ENCODE measurements at regions of chr11 and their contacts with region 1.

Region 1: DNA sequence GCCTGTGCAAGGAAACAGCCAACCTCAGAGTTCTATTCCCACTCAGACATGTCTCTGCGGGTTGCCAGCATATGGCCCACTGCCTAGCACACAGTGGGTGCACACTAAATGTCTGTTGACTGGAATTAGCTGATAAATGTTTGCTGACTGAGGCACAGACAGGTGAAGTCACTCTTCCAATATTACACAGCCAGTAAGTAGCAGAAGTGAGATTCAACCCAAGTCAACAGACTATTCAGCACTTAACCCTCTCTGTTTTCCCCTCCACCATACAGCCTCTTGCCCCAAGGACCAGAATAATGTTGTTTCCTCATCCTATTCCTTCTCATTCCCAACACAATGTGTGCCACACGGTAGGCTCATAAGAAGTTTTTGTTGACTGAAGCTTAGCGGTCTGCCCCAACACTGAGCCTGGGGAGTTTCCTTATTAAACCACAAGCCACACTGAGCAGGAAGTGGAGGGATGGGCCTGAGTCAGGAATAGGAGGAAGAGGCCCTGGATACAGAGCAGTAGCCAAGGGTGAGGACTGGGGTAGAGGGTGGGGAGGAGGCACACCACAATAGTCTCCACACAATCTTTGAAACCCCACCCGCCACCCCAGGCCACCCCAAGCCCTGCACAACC is 15.7 kb upstream of the IL10RA start:
- DNase-seq: no peak
- H3K27ac ChIP-seq: no peak overlapping the region
- CTCF ChIP-seq: no peak

Region 2: DNA sequence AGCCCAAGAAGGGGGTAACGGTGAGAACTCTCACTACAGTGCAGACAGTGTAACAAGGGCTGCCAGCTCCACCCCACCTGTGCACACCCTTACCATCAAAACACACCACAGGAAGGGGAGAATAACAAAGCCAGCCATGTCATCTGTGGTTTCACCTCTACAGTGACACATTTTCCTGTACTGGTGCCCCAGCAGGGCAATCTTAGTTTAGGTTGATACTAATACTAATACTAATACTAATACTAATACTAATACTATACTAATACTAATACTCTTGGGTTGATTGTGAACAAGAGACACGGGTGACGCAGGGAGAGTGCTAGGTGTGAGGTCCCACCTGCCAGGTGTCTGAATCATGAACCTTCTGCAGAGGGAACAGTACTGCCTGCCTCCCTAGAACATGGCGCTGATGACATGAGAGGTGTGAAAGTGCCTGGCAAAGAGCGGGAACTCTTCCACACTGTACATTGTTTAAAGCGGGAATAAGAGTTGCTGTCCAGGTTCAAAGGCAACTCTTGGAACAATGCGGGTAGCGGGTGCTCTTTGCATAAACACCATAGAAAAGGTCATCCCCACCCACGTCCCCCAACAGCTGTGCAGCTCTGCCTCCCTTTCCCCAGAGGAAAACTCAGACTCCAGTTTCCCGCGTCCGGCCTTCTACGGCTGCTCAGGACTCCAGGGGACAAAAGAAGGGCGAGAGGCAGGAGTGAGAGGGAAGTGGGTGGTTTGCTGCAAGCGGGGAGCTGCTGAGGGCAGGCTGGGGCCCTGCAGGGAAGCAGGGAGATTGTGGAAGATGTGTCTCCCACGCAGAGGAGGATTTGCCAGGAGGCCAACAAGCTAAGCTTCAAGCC is 81.3 kb after region 1 on chr11:
- CTCF ChIA-PET with region 1: no interaction called
- POLR2A ChIA-PET with region 1: interaction called, 13 read pairs
- DNase-seq: no peak
- H3K27ac ChIP-seq: no peak overlapping the region
- CTCF ChIP-seq: no peak